ENCODE measurements at regions of chr2 and their contacts with region 1.

Region 1: GRCh38 chr2:40212804-40213470 is 239.0 kb downstream of the SLC8A1 start:
- DNase-seq: no peak
- H3K4me3 ChIP-seq: no peak overlapping the region
- CTCF ChIP-seq: peak; percentile 40

Region 2: GRCh38 chr2:40202798-40203400 is 10.0 kb before region 1 on chr2:
- CTCF ChIA-PET with region 1: interaction called, 25 read pairs
- POLR2A ChIA-PET with region 1: no interaction called
- DNase-seq: no peak
- H3K4me3 ChIP-seq: no peak overlapping the region
- CTCF ChIP-seq: no peak

Region 3: DNA sequence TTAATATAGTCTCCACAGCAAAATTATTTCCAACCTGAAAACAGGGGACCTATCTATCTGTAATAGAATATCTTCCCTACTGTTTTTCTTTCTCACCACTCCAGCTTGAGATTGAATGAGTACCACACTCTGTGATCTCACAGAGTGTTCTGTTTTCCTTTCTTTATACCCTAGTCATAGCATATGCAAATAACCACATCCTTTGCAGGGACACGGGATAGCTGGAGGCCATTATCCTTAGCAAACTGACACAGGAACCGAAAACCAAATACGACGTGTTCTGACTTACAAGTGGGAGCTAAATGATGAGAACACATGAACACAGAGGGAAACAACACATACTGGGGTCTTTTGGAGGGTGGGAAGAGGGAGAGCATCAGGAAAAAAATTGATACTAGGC is 14.3 kb after region 1 on chr2:
- CTCF ChIA-PET with region 1: interaction called, 21 read pairs
- POLR2A ChIA-PET with region 1: interaction called, 3 read pairs
- DNase-seq: no peak
- H3K4me3 ChIP-seq: no peak overlapping the region
- CTCF ChIP-seq: no peak

Region 4: GRCh38 chr2:40244675-40245074 is 31.7 kb after region 1 on chr2:
- CTCF ChIA-PET with region 1: interaction called, 16 read pairs
- POLR2A ChIA-PET with region 1: interaction called, 3 read pairs
- DNase-seq: peak; percentile 55
- H3K4me3 ChIP-seq: no peak overlapping the region
- CTCF ChIP-seq: peak; percentile 70

Region 5: GRCh38 chr2:40448468-40449079 is 235.6 kb after region 1 on chr2:
- CTCF ChIA-PET with region 1: interaction called, 13 read pairs
- POLR2A ChIA-PET with region 1: interaction called, 10 read pairs
- DNase-seq: no peak
- H3K4me3 ChIP-seq: no peak overlapping the region
- CTCF ChIP-seq: peak; percentile 70

Region 6: GRCh38 chr2:40760071-40760666 is 547.2 kb after region 1 on chr2:
- CTCF ChIA-PET with region 1: interaction called, 13 read pairs
- POLR2A ChIA-PET with region 1: no interaction called
- DNase-seq: peak; percentile 21
- H3K4me3 ChIP-seq: no peak overlapping the region
- CTCF ChIP-seq: peak; percentile 81

Measured in AG04449 (cell line).